HAP-1 (cell line): ENCODE measurements at regions of chr10 and their contacts with region 1.

Region 1: GRCh38 chr10:63720072-63720537 is 198.9 kb downstream of the REEP3 start:
- DNase-seq: peak; percentile 48 to 57
- H3K4me3 ChIP-seq: no peak overlapping the region
- H3K4me1 ChIP-seq: 0 out of 2 replicates have a peak, but pooled peaks cover 3% of the 10 kb centered on the region
- H3K27me3 ChIP-seq: peaks cover 15% of the 10 kb centered on the region

Region 2: GRCh38 chr10:63542835-63543575 is 177.1 kb before region 1 on chr10:
- in situ Hi-C with region 1: no loop called
- DNase-seq: no peak
- H3K4me3 ChIP-seq: no peak overlapping the region
- H3K4me1 ChIP-seq: peaks cover 5% of the 10 kb centered on the region; the same call in 1 of the 2 replicates
- H3K27me3 ChIP-seq: no peaks in the 10 kb centered on the region

Region 3: GRCh38 chr10:63619426-63619825 is 100.7 kb before region 1 on chr10:
- in situ Hi-C with region 1: no loop called
- DNase-seq: no peak
- H3K4me3 ChIP-seq: no peak overlapping the region
- H3K4me1 ChIP-seq: no peaks in the 10 kb centered on the region
- H3K27me3 ChIP-seq: no peaks in the 10 kb centered on the region

Region 4: DNA sequence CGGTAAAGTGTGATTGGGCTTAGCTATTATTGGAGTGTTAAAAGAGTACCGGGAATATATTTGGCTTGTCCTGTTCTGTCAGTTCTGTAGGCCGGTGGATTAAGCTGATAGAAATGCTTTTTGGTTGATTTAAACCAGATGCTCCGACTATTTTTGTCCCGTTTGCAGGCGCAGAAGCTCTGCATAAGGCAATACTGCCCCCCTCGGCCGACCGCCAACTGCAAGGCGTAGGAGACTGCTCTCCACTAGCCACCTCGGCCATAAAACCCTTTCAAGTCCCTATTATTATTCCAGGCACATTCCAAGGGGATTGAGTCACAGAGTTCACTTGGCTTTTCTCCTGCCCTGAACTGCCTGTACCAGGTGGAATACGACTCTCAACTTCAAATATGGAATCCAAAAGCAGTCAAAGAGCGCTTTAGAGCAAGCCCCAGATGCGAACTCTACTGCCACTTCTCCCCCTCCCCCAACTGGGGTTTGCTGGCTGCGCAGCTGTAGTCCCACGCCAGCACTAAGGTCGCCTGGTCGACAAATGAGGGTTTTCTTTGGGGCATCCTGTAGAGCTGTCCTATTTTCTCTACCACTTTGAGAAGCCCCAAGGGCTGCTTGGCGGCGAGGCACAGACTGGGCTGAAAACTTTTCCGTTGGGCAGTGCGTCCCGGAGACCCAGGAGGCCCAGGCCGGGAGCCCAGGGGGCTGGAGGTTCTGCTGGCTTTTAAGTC is 90.6 kb before region 1 on chr10:
- in situ Hi-C with region 1: loop called (anchors 10 kb)
- DNase-seq: peak; percentile 97 to 100
- H3K4me3 ChIP-seq: peak overlapping the region; percentile 47
- H3K4me1 ChIP-seq: peaks cover 19% of the 10 kb centered on the region
- H3K27me3 ChIP-seq: no peaks in the 10 kb centered on the region

Region 5: DNA sequence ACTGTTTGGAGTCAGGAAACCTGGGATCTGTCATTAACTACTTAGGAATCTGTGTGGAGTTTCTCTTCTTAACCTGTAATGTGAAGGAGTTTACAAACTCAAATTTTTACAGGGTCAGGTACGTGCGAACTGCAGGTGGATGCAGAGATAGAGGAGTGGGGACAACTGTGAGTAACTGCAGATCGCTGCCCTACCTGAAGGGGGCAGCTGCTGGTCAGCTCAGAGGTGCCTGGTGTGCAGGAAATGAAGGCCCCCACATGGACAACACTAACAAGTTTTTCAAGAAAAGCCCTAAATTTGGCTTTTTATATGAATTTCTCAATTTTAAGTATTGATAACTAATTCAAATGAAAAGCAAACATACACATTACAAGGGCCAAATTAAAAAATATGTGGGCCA is 181.1 kb after region 1 on chr10:
- in situ Hi-C with region 1: no loop called
- DNase-seq: peak in 1 of 2 experiments; percentile 45
- H3K4me3 ChIP-seq: no peak overlapping the region
- H3K4me1 ChIP-seq: peaks cover 4% of the 10 kb centered on the region
- H3K27me3 ChIP-seq: no peaks in the 10 kb centered on the region